WTC11 (cell line): ENCODE measurements at regions of chr6 and their contacts with region 1.

Region 1: GRCh38 chr6:125974214-125974866 is 12.0 kb upstream of the TRMT11 start:
- DNase-seq: no peak
- ATAC-seq: no peak
- H3K4me3 Mint-ChIP-seq: no peak overlapping the region
- H3K27ac Mint-ChIP-seq: no peak overlapping the region
- H3K4me1 Mint-ChIP-seq: no peaks in the 10 kb centered on the region
- H3K27me3 Mint-ChIP-seq: no peaks in the 10 kb centered on the region
- CTCF ChIP-seq: no peak; the same call in 1 of the 2 replicates

Region 2: GRCh38 chr6:125986300-125987025 is 12.1 kb after region 1 on chr6 and contains the start of gene TRMT11:
- CTCF ChIA-PET with region 1: interaction called, 15 read pairs
- POLR2A ChIA-PET with region 1: interaction called, 3 read pairs
- DNase-seq: peak; percentile 93
- ATAC-seq: peak; percentile 93
- H3K4me3 Mint-ChIP-seq: no peak within 1 kb of the TSS; the same call in 1 of the 2 replicates
- H3K27ac Mint-ChIP-seq: no peak within 1 kb of the TSS
- H3K4me1 Mint-ChIP-seq: peaks cover 5% of the 10 kb centered on the region
- H3K27me3 Mint-ChIP-seq: no peaks in the 10 kb centered on the region
- CTCF ChIP-seq: no peak
- total RNA-seq, gene TRMT11: 27.5 to 32.7 TPM (median 32.3 TPM) in 3 replicates